PC-3 (cell line): ENCODE measurements at regions of chr14 and their contacts with region 1.

Region 1: GRCh38 chr14:65302571-65303189 is 109.8 kb upstream of the FUT8 start:
- DNase-seq: peak; percentile 80
- ATAC-seq: peak; percentile 31
- H3K4me3 ChIP-seq: peak overlapping the region; percentile 18; the same call in 1 of the 2 replicates
- H3K27ac ChIP-seq: peak overlapping the region; percentile 94
- H3K4me1 ChIP-seq: peaks cover 58% of the 10 kb centered on the region
- H3K27me3 ChIP-seq: no peaks in the 10 kb centered on the region
- CTCF ChIP-seq: no peak

Region 2: GRCh38 chr14:65222440-65222858 is 80.2 kb before region 1 on chr14:
- CTCF ChIA-PET with region 1: interaction called, 5 read pairs
- POLR2A ChIA-PET with region 1: interaction called, 3 read pairs
- intact Hi-C with region 1: loop called (anchors 1 kb)
- DNase-seq: peak; percentile 78
- ATAC-seq: peak; percentile 44
- H3K4me3 ChIP-seq: no peak overlapping the region
- H3K27ac ChIP-seq: peak overlapping the region; percentile 22
- H3K4me1 ChIP-seq: peaks cover 41% of the 10 kb centered on the region
- H3K27me3 ChIP-seq: no peaks in the 10 kb centered on the region
- CTCF ChIP-seq: peak; percentile 97

Region 3: GRCh38 chr14:65290830-65291229 is 11.8 kb before region 1 on chr14:
- CTCF ChIA-PET with region 1: interaction called, 8 read pairs
- POLR2A ChIA-PET with region 1: interaction called, 15 read pairs
- intact Hi-C with region 1: loop called (anchors 1 kb)
- DNase-seq: peak; percentile 99
- ATAC-seq: peak; percentile 95
- H3K4me3 ChIP-seq: no peak overlapping the region
- H3K27ac ChIP-seq: peak overlapping the region; percentile 96
- H3K4me1 ChIP-seq: peaks cover 20% of the 10 kb centered on the region
- H3K27me3 ChIP-seq: no peaks in the 10 kb centered on the region
- CTCF ChIP-seq: no peak

Region 4: GRCh38 chr14:65336191-65336591 is 33.5 kb after region 1 on chr14:
- CTCF ChIA-PET with region 1: no interaction called
- POLR2A ChIA-PET with region 1: interaction called, 30 read pairs
- intact Hi-C with region 1: no loop called
- DNase-seq: peak; percentile 29
- ATAC-seq: no peak
- H3K4me3 ChIP-seq: no peak overlapping the region
- H3K27ac ChIP-seq: 0 out of 2 replicates have a peak overlapping the region, but pooled peaks have one; percentile 7
- H3K4me1 ChIP-seq: peaks cover 38% of the 10 kb centered on the region
- H3K27me3 ChIP-seq: no peaks in the 10 kb centered on the region
- CTCF ChIP-seq: no peak

Region 5: DNA sequence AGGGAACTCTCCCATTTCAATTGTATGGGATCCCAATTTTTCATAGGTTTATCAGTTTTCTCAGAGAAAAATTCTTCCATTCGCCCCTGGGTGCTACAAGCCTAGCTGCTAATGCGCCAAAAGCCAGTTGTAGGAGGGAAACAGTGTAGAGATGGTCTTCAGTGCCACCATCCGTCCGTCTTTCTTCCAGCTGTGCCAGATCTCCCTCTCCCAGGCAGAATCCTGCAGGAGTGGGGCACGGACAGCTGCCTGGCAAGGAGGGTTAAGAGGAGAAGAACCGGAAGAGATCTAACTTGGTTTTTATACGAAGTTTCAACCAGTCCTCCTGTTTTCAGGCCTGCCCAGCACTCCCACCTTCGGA is 71.0 kb after region 1 on chr14:
- CTCF ChIA-PET with region 1: no interaction called
- POLR2A ChIA-PET with region 1: no interaction called
- intact Hi-C with region 1: loop called (anchors 5 kb)
- DNase-seq: peak; percentile 29
- ATAC-seq: peak; percentile 75
- H3K4me3 ChIP-seq: peak overlapping the region; percentile 58
- H3K27ac ChIP-seq: 0 out of 2 replicates have a peak overlapping the region, but pooled peaks have one; percentile 0
- H3K4me1 ChIP-seq: no peaks in the 10 kb centered on the region
- H3K27me3 ChIP-seq: no peaks in the 10 kb centered on the region
- CTCF ChIP-seq: peak; percentile 28; the same call in 1 of the 2 replicates